Caco-2 (cell line): ENCODE measurements at regions of chrX and their contacts with region 1.

Region 1: DNA sequence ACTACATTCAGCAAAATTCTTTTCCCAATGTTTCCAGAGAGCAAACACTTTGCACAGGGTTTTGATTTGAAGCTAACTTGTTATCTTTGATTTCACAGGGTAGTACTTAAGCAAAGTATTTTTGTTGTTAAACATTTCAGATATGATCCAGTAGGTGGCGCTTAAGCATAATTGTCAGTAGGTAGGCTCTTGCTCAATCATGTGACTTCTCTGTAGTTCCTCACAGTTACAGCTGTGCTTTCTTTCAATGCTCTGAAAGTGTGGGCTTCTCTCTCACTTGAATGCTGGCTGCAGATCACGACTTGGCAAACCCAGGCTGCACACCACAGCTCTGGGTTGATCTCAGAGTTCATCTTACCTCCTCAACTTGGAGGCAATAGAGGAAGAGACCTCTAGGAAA is 1016.5 kb downstream of the SH3BGRL start:
- DNase-seq: peak in 1 of 2 experiments; percentile 13
- H3K4me3 ChIP-seq: no peak overlapping the region
- H3K4me3 Mint-ChIP-seq: no peak overlapping the region
- H3K27ac Mint-ChIP-seq: no peak overlapping the region
- H3K4me1 ChIP-seq: no peaks in the 10 kb centered on the region
- H3K4me1 Mint-ChIP-seq: no peaks in the 10 kb centered on the region
- H3K27me3 ChIP-seq: no peaks in the 10 kb centered on the region
- H3K27me3 Mint-ChIP-seq: no peaks in the 10 kb centered on the region
- CTCF ChIP-seq: peak in 1 of 2 experiments; percentile 13

Region 2: GRCh38 chrX:81957900-81958545 is 260.3 kb before region 1 on chrX:
- CTCF ChIA-PET with region 1: no interaction called
- POLR2A ChIA-PET with region 1: no interaction called
- intact Hi-C with region 1: loop called (anchors 2 kb)
- DNase-seq: peak in 1 of 2 experiments; percentile 19
- H3K4me3 ChIP-seq: no peak overlapping the region
- H3K4me3 Mint-ChIP-seq: no peak overlapping the region
- H3K27ac Mint-ChIP-seq: no peak overlapping the region
- H3K4me1 ChIP-seq: no peaks in the 10 kb centered on the region
- H3K4me1 Mint-ChIP-seq: no peaks in the 10 kb centered on the region
- H3K27me3 ChIP-seq: no peaks in the 10 kb centered on the region
- H3K27me3 Mint-ChIP-seq: no peaks in the 10 kb centered on the region
- CTCF ChIP-seq: peak; percentile 20 to 48

Region 3: GRCh38 chrX:81996166-81996565 is 222.2 kb before region 1 on chrX:
- CTCF ChIA-PET with region 1: no interaction called
- POLR2A ChIA-PET with region 1: no interaction called
- intact Hi-C with region 1: no loop called
- DNase-seq: no peak
- H3K4me3 ChIP-seq: no peak overlapping the region
- H3K4me3 Mint-ChIP-seq: no peak overlapping the region
- H3K27ac Mint-ChIP-seq: no peak overlapping the region
- H3K4me1 ChIP-seq: no peaks in the 10 kb centered on the region
- H3K4me1 Mint-ChIP-seq: no peaks in the 10 kb centered on the region
- H3K27me3 ChIP-seq: no peaks in the 10 kb centered on the region
- H3K27me3 Mint-ChIP-seq: no peaks in the 10 kb centered on the region
- CTCF ChIP-seq: no peak

Region 4: GRCh38 chrX:82676386-82676785 is 458.0 kb after region 1 on chrX:
- CTCF ChIA-PET with region 1: interaction called, 6 read pairs
- POLR2A ChIA-PET with region 1: no interaction called
- intact Hi-C with region 1: loop called (anchors 1 kb)
- DNase-seq: no peak
- H3K4me3 ChIP-seq: no peak overlapping the region
- H3K4me3 Mint-ChIP-seq: no peak overlapping the region
- H3K27ac Mint-ChIP-seq: no peak overlapping the region
- H3K4me1 ChIP-seq: no peaks in the 10 kb centered on the region
- H3K4me1 Mint-ChIP-seq: no peaks in the 10 kb centered on the region
- H3K27me3 ChIP-seq: no peaks in the 10 kb centered on the region
- H3K27me3 Mint-ChIP-seq: no peaks in the 10 kb centered on the region
- CTCF ChIP-seq: no peak

Region 5: DNA sequence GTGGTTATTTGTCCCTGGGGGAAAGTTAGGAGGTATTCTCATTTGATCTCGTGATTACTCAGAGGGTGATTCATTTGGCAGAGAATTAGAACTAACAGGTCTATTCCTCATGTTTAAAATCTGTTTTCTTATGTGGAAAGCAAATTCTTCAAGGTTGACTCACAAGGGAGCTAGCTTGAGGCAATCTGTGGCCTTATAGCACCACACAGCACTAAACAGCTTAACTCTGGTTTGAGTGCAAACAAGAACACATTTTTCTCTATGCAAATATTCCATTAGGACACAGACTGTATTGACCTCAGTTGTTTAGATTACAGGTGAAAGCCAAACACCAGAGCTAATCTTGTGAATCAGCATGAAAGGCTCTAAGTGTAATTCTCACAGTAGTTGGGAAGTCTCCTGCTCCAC is 595.3 kb after region 1 on chrX:
- CTCF ChIA-PET with region 1: no interaction called
- POLR2A ChIA-PET with region 1: no interaction called
- intact Hi-C with region 1: loop called (anchors 5 kb)
- DNase-seq: peak; percentile 39 to 47
- H3K4me3 ChIP-seq: no peak overlapping the region
- H3K4me3 Mint-ChIP-seq: no peak overlapping the region
- H3K27ac Mint-ChIP-seq: peak overlapping the region; percentile 32
- H3K4me1 ChIP-seq: 0 out of 2 replicates have a peak, but pooled peaks cover 4% of the 10 kb centered on the region
- H3K4me1 Mint-ChIP-seq: no peaks in the 10 kb centered on the region
- H3K27me3 ChIP-seq: no peaks in the 10 kb centered on the region
- H3K27me3 Mint-ChIP-seq: no peaks in the 10 kb centered on the region
- CTCF ChIP-seq: no peak